Mammary epithelial cell (primary cell): ENCODE measurements at regions of chr2 and their contacts with region 1.

Region 1: DNA sequence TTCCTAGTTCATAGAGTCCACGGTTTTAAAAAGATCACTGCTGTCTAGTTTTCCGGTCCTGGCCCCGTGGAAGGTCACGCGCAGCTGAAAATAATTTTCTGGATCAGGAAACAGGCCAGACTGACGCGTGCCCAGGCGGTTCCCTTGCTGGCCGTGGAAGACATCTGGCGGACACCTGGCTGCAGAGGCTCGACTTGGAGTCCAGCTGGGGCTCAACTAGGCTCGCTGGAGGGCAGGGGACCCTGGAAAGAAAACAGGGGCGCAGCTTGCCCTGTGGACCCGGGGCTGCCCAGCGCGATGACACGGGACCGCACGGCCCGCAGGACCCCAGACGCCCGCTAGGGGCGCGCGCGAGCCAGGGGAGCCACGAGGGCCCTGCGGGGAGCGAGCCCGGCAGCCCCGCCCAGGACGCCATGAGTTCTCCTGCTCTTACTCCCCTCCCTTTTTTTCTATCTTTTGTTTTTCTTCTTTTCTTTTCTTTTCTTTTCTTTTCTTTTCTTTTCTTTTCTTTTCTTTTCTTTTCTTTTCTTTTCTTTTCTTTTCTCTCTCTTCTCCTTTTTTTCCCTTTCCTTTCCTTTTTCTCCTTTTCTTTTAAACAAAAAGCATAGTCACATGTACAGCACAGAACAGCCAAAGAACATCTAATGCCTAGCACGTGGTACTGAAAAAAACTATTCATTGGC is 43.2 kb upstream of the UBE2F start:
- DNase-seq: peak; percentile 29
- H3K4me3 ChIP-seq: no peak overlapping the region
- H3K27ac ChIP-seq: no peak overlapping the region
- H3K4me1 ChIP-seq: peaks cover 14% of the 10 kb centered on the region
- H3K27me3 ChIP-seq: no peaks in the 10 kb centered on the region
- CTCF ChIP-seq: peak; percentile 51 to 55

Region 2: GRCh38 chr2:237815637-237816036 is 108.0 kb before region 1 on chr2:
- CTCF ChIA-PET with region 1: no interaction called
- dilution Hi-C with region 1: no loop called
- in situ Hi-C with region 1: no loop called
- intact Hi-C with region 1: no loop called
- DNase-seq: no peak
- H3K4me3 ChIP-seq: no peak overlapping the region
- H3K27ac ChIP-seq: no peak overlapping the region
- H3K4me1 ChIP-seq: peaks cover 4% of the 10 kb centered on the region
- H3K27me3 ChIP-seq: peaks cover 11% of the 10 kb centered on the region
- CTCF ChIP-seq: no peak

Region 3: DNA sequence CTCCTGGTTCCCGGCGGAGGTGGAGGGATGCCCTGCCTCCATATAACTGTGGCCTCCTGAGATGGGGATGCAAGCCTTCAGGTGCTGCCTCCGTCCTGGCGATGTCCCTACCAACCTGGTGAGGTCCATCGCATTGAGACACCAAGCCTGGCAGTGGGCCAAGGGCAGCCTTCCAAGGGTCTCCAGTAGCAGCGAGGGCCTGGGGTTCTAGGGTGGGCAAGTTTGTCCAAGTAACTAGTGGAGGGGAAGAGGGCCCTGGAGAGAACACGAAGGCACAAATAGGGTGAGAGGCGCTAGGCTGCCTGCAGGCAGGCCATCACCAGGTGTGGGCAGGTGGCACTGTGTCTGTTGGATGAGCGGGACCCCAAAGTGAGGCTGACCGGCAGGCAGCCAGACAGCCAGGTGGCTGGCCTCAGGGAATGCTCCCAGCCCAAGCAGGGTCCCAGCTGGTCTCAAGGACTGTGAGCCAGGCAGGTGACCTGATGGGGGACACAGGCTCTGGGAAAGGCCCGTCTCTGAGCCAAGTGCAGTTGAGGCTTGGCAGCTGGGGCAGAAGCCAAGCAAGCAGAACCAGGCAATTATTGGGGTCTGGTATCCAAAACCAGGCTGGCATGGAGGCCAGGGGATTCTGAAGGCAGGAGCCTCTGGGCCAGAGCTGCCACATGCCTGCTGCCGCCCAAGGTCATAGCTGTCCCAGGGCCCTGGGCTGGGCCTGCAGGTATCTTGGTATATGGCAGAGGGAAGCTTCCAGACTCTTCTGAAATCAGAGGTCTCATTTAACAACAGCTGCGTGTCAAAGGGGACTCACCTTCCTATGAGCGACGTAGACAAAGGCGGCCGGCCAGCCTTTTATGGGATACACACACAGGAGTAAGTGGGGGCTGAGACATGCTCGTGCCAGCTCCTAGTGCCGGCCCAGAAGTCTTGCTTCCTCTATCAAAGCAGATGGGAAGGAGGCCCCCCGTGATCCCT is 40.8 kb before region 1 on chr2:
- CTCF ChIA-PET with region 1: no interaction called
- dilution Hi-C with region 1: loop called (anchors 5 kb)
- in situ Hi-C with region 1: no loop called
- intact Hi-C with region 1: loop called (anchors 1 kb)
- DNase-seq: no peak
- H3K4me3 ChIP-seq: no peak overlapping the region
- H3K27ac ChIP-seq: no peak overlapping the region
- H3K4me1 ChIP-seq: peaks cover 9% of the 10 kb centered on the region
- H3K27me3 ChIP-seq: no peaks in the 10 kb centered on the region
- CTCF ChIP-seq: no peak